Heart right ventricle (tissue), 16 donors: ENCODE measurements at regions of chr7 and their contacts with region 1.

Region 1: DNA sequence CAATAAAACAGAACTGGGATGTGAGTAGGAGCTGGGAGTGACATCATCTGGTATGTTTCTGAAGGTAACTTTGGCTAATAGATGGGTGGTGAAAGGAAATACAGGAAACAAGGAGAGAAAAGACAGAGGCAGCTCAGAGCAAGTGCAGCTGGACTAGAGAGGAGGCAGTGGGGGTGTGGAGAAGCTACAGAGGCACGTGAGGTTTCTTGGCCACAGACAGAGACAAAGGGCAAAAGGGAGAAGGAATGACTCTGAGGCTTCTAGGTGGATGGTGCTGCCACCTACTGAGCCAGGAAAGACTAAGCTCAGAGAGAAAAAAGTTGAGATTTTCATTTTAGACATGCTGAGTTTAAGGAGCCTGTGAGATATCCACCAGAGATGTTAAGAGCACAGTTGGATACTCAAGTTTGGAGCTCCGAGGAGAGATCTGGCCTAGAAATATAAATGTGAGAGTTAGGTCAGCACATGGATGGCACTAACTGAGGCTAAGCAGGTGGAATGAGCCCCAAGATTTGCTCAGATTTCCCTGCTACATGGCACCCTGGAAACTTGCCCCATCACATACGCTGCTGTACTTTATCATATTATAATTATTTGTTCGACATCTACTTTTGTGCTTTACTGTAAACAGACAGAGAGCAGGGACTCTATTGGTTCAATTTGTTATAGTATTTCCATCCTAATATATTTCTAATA is 293.0 kb upstream of the IMMP2L start:
- DNase-seq: peak in 1 of 2 donors; percentile 21
- ATAC-seq: peak in 7 of 8 donors; percentile 38 to 79 (median 67)
- H3K4me3 ChIP-seq: no peak overlapping the region
- H3K27ac ChIP-seq: no peak overlapping the region
- H3K4me1 ChIP-seq: peaks cover 0 to 9% (median 0%) of the 10 kb centered on the region in 9 donors
- H3K27me3 ChIP-seq: no peaks in the 10 kb centered on the region
- CTCF ChIP-seq: peak in 8 of 9 donors; percentile 17 to 58 (median 46)

Region 2: DNA sequence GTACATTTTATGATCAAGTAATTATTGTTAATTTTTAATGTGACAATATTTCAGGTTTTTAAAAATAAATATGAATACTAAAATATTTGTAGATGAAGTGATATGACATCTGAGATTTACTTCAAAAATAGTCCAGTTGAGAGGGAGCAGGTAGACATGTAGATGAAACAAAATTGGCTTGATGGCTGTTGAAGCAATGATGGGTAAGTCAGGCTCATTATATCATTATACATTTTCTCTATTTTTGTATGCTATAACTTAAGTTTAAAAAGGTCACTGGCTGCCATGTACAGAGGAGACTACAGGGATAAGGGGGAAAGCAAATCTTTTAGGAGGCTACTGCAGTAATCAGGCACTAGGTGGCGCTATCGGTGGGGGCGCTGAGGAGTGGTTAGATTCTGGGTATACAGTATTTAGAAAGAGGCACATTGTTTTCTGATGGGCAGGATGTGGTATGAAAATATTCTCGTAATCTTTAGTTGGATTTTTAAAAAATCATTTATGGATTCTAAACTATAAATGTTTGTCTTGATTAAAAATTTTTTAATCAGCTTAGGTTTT is 103.2 kb before region 1 on chr7:
- intact Hi-C with region 1: loop called in 4 of 10 experiments (anchors 5 to 10 kb)
- DNase-seq: peak; percentile 52 to 53
- ATAC-seq: peak in 5 of 8 donors; percentile 29 to 65 (median 62)
- H3K4me3 ChIP-seq: no peak overlapping the region
- H3K27ac ChIP-seq: no peak overlapping the region
- H3K4me1 ChIP-seq: no peaks in the 10 kb centered on the region
- H3K27me3 ChIP-seq: no peaks in the 10 kb centered on the region
- CTCF ChIP-seq: peak; percentile 36 to 85 (median 75)

Region 3: GRCh38 chr7:111763221-111763801 is 92.0 kb before region 1 on chr7:
- intact Hi-C with region 1: loop called in 7 of 10 experiments (anchors 5 to 10 kb)
- DNase-seq: no peak
- ATAC-seq: peak in 4 of 8 donors; percentile 38 to 69 (median 54)
- H3K4me3 ChIP-seq: no peak overlapping the region
- H3K27ac ChIP-seq: no peak overlapping the region
- H3K4me1 ChIP-seq: peaks cover 0 to 14% (median 0%) of the 10 kb centered on the region in 9 donors
- H3K27me3 ChIP-seq: no peaks in the 10 kb centered on the region
- CTCF ChIP-seq: peak; percentile 19 to 74 (median 65)

Region 4: DNA sequence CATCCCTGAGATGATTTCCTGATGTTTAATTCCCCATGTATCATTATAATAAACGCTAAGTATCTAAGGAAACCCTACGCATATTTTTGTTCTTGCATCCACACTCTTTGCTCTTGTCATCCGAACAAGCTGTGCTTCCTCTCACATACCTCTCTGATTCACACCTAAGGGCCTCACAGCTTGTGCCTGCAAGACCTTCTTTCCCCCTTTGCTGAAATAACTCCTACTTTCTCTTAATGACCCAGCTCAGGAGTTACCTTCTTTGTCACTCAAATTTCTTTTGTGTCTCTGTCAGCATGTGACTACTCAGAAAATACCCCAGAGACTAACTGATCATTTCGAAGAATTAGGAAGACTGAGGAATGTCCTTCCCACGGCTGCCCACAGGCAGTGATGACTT is 83.7 kb before region 1 on chr7:
- intact Hi-C with region 1: loop called in 2 of 10 experiments (anchors 5 kb)
- DNase-seq: no peak
- ATAC-seq: no peak
- H3K4me3 ChIP-seq: no peak overlapping the region
- H3K27ac ChIP-seq: no peak overlapping the region
- H3K4me1 ChIP-seq: no peaks in the 10 kb centered on the region
- H3K27me3 ChIP-seq: no peaks in the 10 kb centered on the region
- CTCF ChIP-seq: no peak

Region 5: GRCh38 chr7:112022128-112022527 is 166.8 kb after region 1 on chr7:
- intact Hi-C with region 1: no loop called
- DNase-seq: no peak
- ATAC-seq: peak in 3 of 8 donors; percentile 22 to 46 (median 38)
- H3K4me3 ChIP-seq: no peak overlapping the region
- H3K27ac ChIP-seq: peak overlapping the region in 1 of 10 donors; percentile 61
- H3K4me1 ChIP-seq: peaks cover 0 to 71% (median 22%) of the 10 kb centered on the region in 9 donors
- H3K27me3 ChIP-seq: no peaks in the 10 kb centered on the region
- CTCF ChIP-seq: no peak